A549 (cell line): ENCODE measurements at regions of chr17 and their contacts with region 1.

Region 1: DNA sequence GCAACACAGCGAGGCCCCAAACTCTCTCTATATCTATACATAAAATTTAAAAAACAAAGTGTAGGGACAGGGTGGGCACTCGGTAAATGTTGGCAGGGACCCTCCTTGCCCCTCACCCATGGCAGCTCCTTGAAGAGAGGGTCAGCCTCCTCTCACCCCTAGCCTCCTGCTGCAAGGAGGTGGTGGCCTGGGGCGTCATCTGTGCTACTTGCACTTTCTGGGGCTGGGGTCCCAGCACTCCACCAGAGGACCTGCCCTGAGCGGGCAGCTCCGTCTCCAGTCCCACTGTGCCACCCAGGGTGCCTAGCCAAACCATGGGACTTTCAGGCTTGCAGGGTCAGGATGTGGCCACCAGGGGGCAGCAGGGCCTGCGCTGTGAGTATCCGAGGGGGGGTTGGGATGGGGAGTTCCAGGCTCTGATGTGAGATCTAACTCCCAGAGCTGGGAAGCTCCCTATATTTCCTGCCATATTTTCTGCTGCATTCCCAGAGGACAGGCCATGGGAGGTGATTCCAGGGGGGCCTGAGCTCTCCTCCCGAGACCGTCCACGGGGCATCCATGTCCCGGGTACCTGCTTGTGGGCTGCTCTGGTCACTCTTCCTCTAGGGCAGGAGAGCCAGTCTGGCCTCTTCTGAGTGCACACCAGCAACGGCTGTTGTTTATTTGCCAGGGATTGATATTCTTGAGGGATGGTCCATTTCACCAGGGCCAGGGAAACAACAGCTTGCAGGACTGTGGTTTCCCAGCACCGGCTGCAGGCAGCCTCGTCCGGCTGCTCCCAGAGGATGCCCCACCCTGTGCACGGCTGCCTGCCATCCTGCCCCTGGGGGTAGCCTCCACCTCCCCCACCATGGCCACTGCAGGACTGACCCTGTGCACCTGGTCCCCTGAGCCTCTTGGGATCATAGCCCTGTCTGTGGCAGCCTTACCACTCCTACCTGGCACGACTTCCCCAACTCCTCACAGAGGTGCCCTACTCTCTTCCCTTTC is 1.1 kb downstream of the GPR142 start:
- DNase-seq: peak; percentile 66 to 88
- ATAC-seq: peak; percentile 62 to 89
- H3K4me3 ChIP-seq: no peak overlapping the region
- H3K27ac ChIP-seq: no peak overlapping the region
- H3K4me1 ChIP-seq: peaks cover 6% of the 10 kb centered on the region; the same call in 1 of the 3 replicates
- CTCF ChIP-seq: peak; percentile 94
- EP300 ChIP-seq: no peak
- POLR2A ChIP-seq: no peak
- RAD21 ChIP-seq: peak; percentile 85 to 87

Region 2: GRCh38 chr17:74245145-74245831 is 123.1 kb before region 1 on chr17:
- CTCF ChIA-PET with region 1: no interaction called
- POLR2A ChIA-PET with region 1: no interaction called
- DNase-seq: no peak
- ATAC-seq: peak; percentile 6 to 39; a peak in 3 of 6 replicates
- H3K4me3 ChIP-seq: no peak overlapping the region
- H3K27ac ChIP-seq: no peak overlapping the region
- H3K4me1 ChIP-seq: no peaks in the 10 kb centered on the region
- CTCF ChIP-seq: no peak
- EP300 ChIP-seq: no peak
- POLR2A ChIP-seq: no peak
- RAD21 ChIP-seq: no peak

Region 3: GRCh38 chr17:74305865-74306654 is 62.3 kb before region 1 on chr17:
- CTCF ChIA-PET with region 1: interaction called, 124 read pairs
- POLR2A ChIA-PET with region 1: no interaction called
- DNase-seq: peak in 1 of 2 experiments; percentile 28
- ATAC-seq: no peak; a peak in 1 of 6 replicates
- H3K4me3 ChIP-seq: no peak overlapping the region
- H3K27ac ChIP-seq: no peak overlapping the region
- H3K4me1 ChIP-seq: 0 out of 3 replicates have a peak, but pooled peaks cover 3% of the 10 kb centered on the region
- CTCF ChIP-seq: peak; percentile 12; the same call in 2 of the 3 replicates
- EP300 ChIP-seq: no peak
- POLR2A ChIP-seq: no peak
- RAD21 ChIP-seq: peak in 1 of 2 experiments; percentile 46; a peak in 1 of 5 replicates

Region 4: DNA sequence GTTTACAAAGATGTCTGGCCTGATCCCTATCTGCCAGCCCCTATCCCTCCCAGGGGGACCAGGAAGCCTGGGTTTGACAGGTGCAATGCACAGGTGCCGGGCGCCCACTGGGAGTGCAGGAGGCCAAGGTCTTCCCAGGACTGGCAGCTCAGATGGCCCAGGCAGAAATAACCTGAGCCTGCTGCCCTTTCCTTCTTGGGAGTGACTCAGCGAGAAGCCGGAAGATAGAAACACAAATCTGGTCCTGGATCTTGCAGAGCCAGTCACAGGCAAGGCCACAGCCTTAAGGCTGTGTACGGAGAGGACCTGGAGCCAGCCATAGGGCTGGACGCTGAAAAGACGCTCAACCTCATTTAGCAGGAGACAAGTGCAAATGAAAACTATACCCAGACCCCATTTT is 26.6 kb after region 1 on chr17:
- CTCF ChIA-PET with region 1: interaction called, 26 read pairs
- POLR2A ChIA-PET with region 1: no interaction called
- DNase-seq: peak in 1 of 2 experiments; percentile 27
- ATAC-seq: peak; percentile 41 to 49; a peak in 5 of 6 replicates
- H3K4me3 ChIP-seq: no peak overlapping the region
- H3K27ac ChIP-seq: peak overlapping the region in 1 of 2 experiments; percentile 42; a peak in 2 of 6 replicates
- H3K4me1 ChIP-seq: peaks cover 5% of the 10 kb centered on the region; the same call in 2 of the 3 replicates
- CTCF ChIP-seq: no peak
- EP300 ChIP-seq: no peak
- POLR2A ChIP-seq: no peak
- RAD21 ChIP-seq: no peak

Region 5: GRCh38 chr17:74467221-74467951 is 99.0 kb after region 1 on chr17:
- CTCF ChIA-PET with region 1: interaction called, 40 read pairs
- POLR2A ChIA-PET with region 1: no interaction called
- DNase-seq: no peak
- ATAC-seq: 0 out of 6 replicates have a peak, but pooled peaks have one; percentile 17 to 32
- H3K4me3 ChIP-seq: no peak overlapping the region
- H3K27ac ChIP-seq: no peak overlapping the region
- H3K4me1 ChIP-seq: no peaks in the 10 kb centered on the region
- CTCF ChIP-seq: no peak
- EP300 ChIP-seq: no peak
- POLR2A ChIP-seq: no peak
- RAD21 ChIP-seq: no peak

Region 6: DNA sequence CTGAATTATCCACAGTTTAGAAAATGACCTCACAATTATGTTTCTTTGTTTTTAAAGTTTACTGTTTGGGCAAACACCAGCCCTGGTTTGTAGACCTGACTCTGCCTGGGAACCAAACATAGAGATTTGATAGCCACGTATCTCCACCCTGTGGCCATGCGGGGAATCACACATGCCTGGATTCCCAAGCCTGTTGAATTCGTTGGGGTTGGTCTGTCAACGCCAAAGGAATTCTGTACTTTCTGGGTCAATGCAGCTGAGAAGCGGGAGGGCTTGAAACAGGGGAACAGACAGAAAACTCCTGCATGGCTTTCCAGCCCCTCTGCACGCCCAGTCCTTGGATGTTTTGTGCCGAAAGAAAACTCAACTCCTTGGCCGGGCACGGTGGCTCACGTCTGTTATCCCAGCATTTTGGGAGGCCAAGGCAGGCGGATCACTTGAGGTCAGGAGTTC is 125.0 kb after region 1 on chr17:
- CTCF ChIA-PET with region 1: interaction called, 59 read pairs
- POLR2A ChIA-PET with region 1: no interaction called
- DNase-seq: peak; percentile 75 to 86
- ATAC-seq: peak; percentile 97 to 98
- H3K4me3 ChIP-seq: no peak overlapping the region
- H3K27ac ChIP-seq: no peak overlapping the region
- H3K4me1 ChIP-seq: no peaks in the 10 kb centered on the region
- CTCF ChIP-seq: peak; percentile 90
- EP300 ChIP-seq: no peak
- POLR2A ChIP-seq: no peak
- RAD21 ChIP-seq: peak; percentile 92 to 97

Region 7: DNA sequence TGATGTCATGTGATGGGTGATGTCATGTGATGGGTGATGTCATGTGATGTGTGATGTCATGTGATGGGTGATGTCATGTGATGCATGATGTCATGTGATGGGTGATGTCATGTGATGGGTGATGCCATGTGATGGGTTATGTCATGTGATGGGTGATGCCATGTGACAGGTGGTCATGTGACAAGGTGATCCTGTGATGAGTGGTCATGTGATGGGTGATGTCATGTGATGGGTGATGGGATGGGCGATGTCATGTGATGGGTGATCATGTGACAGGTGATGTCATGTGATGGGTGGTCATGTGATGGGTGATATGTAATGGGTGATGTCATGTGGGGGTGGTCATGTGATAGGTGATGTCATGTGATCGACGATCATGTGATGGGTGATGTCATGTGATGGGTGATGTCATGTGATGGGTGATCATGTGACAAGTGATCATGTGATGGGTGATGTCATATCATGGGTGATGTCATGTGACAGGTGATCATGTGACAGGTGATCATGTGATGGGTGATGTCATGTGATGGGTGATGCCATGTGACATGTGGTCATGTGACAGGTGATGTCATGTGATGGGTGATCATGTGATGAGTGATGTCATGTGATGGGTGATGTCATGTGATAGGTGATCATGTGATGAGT is 145.7 kb after region 1 on chr17:
- CTCF ChIA-PET with region 1: interaction called, 13 read pairs
- POLR2A ChIA-PET with region 1: no interaction called
- DNase-seq: peak; percentile 55 to 87
- ATAC-seq: peak; percentile 24 to 44; a peak in 2 of 6 replicates
- H3K4me3 ChIP-seq: no peak overlapping the region
- H3K27ac ChIP-seq: no peak overlapping the region
- H3K4me1 ChIP-seq: no peaks in the 10 kb centered on the region
- CTCF ChIP-seq: no peak
- EP300 ChIP-seq: no peak
- POLR2A ChIP-seq: no peak
- RAD21 ChIP-seq: no peak

Region 8: GRCh38 chr17:74601944-74602572 is 233.7 kb after region 1 on chr17:
- CTCF ChIA-PET with region 1: interaction called, 17 read pairs
- POLR2A ChIA-PET with region 1: no interaction called
- DNase-seq: peak; percentile 70 to 79
- ATAC-seq: peak; percentile 65 to 85; a peak in 4 of 6 replicates
- H3K4me3 ChIP-seq: no peak overlapping the region
- H3K27ac ChIP-seq: peak overlapping the region in 1 of 2 experiments; percentile 44; a peak in 2 of 6 replicates
- H3K4me1 ChIP-seq: peaks cover 12% of the 10 kb centered on the region
- CTCF ChIP-seq: peak; percentile 96
- EP300 ChIP-seq: no peak
- POLR2A ChIP-seq: no peak
- RAD21 ChIP-seq: peak; percentile 91 to 93